ENCODE measurements at regions of chr7 and their contacts with region 1.

Region 1: GRCh38 chr7:149067876-149068275 is 22.6 kb downstream of the ZNF786 start:
- DNase-seq: no peak
- ATAC-seq: no peak
- H3K4me3 ChIP-seq: no peak overlapping the region
- H3K27ac ChIP-seq: no peak overlapping the region
- H3K4me1 ChIP-seq: peaks cover 0 to 20% (median 0%) of the 10 kb centered on the region in 9 donors
- H3K27me3 ChIP-seq: no peaks in the 10 kb centered on the region
- CTCF ChIP-seq: no peak

Region 2: DNA sequence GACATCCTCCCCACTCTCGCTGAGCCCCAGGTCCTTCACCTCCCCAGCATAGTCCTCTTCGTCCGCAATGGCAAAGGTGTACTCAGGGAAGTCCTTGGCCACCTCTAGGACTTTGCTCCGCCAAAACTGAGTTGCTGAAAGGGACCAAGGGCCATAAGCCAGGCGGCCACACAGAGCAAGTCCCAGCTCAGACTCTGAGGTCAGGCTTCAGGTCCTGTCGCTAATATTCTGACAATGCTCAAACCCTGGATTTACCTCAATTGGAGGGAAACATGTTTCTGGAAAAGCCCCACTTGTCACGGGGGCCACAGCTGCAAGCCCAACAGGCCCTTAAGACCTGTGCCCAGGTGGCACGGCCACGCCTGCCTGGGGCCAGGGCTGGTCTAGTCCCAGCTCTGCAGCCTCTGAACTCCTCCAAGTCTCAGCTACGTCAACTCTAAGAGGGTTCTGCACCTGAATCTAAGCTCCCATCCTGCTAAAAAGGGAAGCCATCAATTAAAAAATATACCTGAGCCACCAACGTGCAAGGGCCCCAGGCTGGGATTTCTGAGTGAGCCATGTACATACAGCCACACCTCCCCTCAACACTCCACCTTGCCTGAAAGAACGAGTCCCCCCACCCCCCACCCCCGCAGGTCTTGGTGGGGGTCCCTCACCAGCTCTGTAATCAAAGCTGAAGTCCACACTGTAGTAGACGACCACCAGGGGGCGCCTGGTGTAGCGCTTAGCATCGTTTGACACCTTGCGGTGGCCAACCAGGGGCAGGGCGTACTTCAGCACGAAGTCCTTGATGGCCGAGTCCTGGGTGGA is 62.4 kb before region 1 on chr7:
- intact Hi-C with region 1: loop called in 9 of 10 experiments (anchors 1 to 10 kb)
- DNase-seq: peak; percentile 85
- ATAC-seq: peak; percentile 77 to 94 (median 82)
- H3K4me3 ChIP-seq: no peak overlapping the region
- H3K27ac ChIP-seq: no peak overlapping the region
- H3K4me1 ChIP-seq: peaks cover 0 to 4% (median 0%) of the 10 kb centered on the region in 9 donors
- H3K27me3 ChIP-seq: no peaks in the 10 kb centered on the region
- CTCF ChIP-seq: peak; percentile 82 to 95 (median 89)

Region 3: GRCh38 chr7:149028346-149029109 is 39.3 kb before region 1 on chr7 and contains the start of gene PDIA4:
- intact Hi-C with region 1: loop called in 7 of 10 experiments (anchors 1 to 5 kb)
- DNase-seq: peak; percentile 99 to 100
- ATAC-seq: peak; percentile 95 to 99 (median 98)
- H3K4me3 ChIP-seq: peak within 1 kb of the TSS; percentile 63 to 92 (median 84)
- H3K27ac ChIP-seq: peak within 1 kb of the TSS; percentile 44 to 95 (median 88)
- H3K4me1 ChIP-seq: peaks cover 0 to 35% (median 22%) of the 10 kb centered on the region in 9 donors
- H3K27me3 ChIP-seq: no peaks in the 10 kb centered on the region
- CTCF ChIP-seq: peak in 6 of 9 donors; percentile 8 to 49 (median 33)
- total RNA-seq, gene PDIA4: 18.2 to 49.2 (median 24.6) TPM

Region 4: GRCh38 chr7:149125863-149126661 is 58.2 kb after region 1 on chr7 and contains the start of gene ZNF425:
- intact Hi-C with region 1: loop called in 1 of 10 experiments (anchors 2 kb)
- DNase-seq: peak; percentile 90 to 95
- ATAC-seq: peak; percentile 93 to 98 (median 96)
- H3K4me3 ChIP-seq: peak within 1 kb of the TSS; percentile 76 to 100 (median 94)
- H3K27ac ChIP-seq: peak within 1 kb of the TSS; percentile 77 to 98 (median 95)
- H3K4me1 ChIP-seq: peaks cover 6 to 22% (median 18%) of the 10 kb centered on the region in 9 donors
- H3K27me3 ChIP-seq: no peaks in the 10 kb centered on the region
- CTCF ChIP-seq: peak; percentile 85 to 99 (median 96)
- total RNA-seq, gene ZNF425: 0.28 to 1.2 (median 0.78) TPM

Measured in heart right ventricle (tissue), 16 donors.